Panc1 (cell line): ENCODE measurements at regions of chr5 and their contacts with region 1.

Region 1: DNA sequence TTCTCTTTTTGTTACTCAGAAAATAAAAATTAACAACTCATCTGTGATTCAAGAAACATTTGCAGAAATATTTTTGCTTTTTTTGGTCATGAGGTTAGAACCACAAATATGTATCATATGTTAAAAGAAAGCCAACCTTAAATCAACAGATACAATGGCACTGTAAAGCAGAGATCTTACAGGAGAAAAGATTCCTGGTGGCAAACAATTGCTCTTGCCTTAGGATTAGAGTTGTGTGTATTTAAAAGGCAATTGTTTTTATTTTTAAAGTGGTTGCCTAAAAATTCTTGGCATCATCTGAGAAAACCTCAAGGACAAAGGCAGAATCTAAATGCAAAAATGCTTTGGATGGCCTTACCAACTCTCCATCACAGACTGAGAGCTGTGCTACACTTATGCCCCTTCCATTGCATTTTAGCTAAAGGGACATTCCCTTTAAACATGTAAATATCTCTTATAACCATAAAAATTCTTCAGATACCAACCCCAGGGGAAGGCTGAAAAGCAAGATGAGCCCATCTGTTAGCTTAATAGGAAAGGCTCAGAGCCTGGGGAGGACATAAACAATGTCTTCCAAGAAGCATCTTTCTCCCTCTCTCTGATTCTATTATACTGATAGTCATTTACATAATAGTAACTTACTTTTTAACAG is 100.4 kb downstream of the FAM114A2 start:
- DNase-seq: no peak
- ATAC-seq: no peak
- H3K4me3 ChIP-seq: no peak overlapping the region
- H3K27ac ChIP-seq: no peak overlapping the region
- H3K4me1 ChIP-seq: no peaks in the 10 kb centered on the region
- H3K27me3 ChIP-seq: no peaks in the 10 kb centered on the region
- CTCF ChIP-seq: no peak

Region 2: DNA sequence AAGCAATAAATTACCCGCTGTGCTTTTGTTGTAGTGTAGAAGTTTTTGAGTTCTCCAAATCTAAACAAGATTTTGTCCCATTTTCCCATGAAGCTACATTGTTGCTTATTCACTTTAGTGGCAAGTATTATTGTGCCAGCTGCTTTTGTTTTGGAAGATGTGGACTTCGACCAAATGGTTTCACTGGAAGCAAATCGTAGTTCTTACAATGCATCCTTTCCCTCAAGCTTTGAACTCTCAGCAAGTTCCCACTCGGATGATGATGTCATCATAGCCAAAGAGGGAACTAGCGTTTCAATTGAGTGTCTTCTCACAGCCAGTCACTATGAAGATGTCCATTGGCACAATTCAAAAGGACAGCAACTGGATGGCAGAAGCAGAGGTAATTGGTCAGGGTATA is 111.3 kb after region 1 on chr5:
- CTCF ChIA-PET with region 1: no interaction called
- POLR2A ChIA-PET with region 1: interaction called, 13 read pairs
- in situ Hi-C with region 1: no loop called
- intact Hi-C with region 1: no loop called
- DNase-seq: no peak
- ATAC-seq: no peak
- H3K4me3 ChIP-seq: no peak overlapping the region
- H3K27ac ChIP-seq: no peak overlapping the region
- H3K4me1 ChIP-seq: no peaks in the 10 kb centered on the region
- H3K27me3 ChIP-seq: no peaks in the 10 kb centered on the region
- CTCF ChIP-seq: no peak